ENCODE measurements at regions of chr5 and their contacts with region 1.

Region 1: DNA sequence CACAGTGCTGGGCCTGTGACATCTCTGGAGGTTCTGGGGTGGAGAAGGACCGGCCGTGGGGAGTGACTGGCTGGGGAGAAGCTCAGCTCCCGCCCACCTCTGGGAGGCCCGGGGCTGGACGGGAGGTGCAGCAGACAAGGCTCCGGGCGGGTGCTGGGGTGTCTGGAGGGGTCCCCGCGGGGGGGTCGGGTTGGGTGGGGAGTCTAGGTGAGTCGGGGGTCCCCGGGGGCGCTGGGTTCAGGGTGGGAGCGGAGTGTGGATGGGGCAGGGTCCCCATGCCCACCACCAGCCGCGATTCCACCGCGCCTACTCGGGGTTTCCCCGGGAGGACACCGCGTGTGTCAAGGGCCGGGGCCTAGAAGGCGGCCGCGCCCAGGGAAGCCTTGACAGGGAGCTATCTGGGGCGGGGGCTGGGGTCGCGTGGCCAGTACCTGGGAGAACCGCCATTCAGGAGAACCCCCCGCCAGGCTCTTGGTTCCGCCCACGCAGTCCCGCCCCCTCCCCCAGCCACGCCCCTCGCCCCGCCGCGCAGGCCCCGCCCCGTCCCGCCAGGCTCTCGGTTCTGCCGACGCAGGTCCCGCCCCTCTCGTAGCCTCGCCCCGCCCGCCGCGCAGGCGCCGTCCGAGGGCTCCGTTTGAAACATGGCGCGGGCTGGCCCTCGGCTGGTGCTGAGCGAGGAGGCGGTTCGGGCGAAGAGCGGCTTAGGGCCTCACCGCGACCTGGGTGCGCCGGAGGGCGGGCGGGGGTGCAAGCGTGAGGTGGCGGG is at the start of gene CEP72:
- DNase-seq: peak; percentile 84
- H3K4me3 ChIP-seq: peak within 1 kb of the TSS; percentile 77 to 92 (median 82)
- H3K27ac ChIP-seq: no peak within 1 kb of the TSS
- H3K4me1 ChIP-seq: peaks cover 2% of the 10 kb centered on the region
- H3K27me3 ChIP-seq: no peaks in the 10 kb centered on the region
- CTCF ChIP-seq: no peak
- POLR2A ChIP-seq: no peak
- total RNA-seq, gene CEP72: 9.5 and 9.6 TPM in 2 replicates

Region 2: GRCh38 chr5:472656-473553 is 139.0 kb before region 1 on chr5:
- CTCF ChIA-PET with region 1: no interaction called
- POLR2A ChIA-PET with region 1: no interaction called
- dilution Hi-C with region 1: no loop called
- intact Hi-C with region 1: loop called (anchors 5 kb)
- DNase-seq: peak; percentile 75
- H3K4me3 ChIP-seq: peak overlapping the region; percentile 49 to 79 (median 55)
- H3K27ac ChIP-seq: peak overlapping the region; percentile 82
- H3K4me1 ChIP-seq: peaks cover 6% of the 10 kb centered on the region
- H3K27me3 ChIP-seq: peaks cover 5 to 10% of the 10 kb centered on the region in 2 experiments
- CTCF ChIP-seq: no peak
- POLR2A ChIP-seq: peak; percentile 63

Region 3: DNA sequence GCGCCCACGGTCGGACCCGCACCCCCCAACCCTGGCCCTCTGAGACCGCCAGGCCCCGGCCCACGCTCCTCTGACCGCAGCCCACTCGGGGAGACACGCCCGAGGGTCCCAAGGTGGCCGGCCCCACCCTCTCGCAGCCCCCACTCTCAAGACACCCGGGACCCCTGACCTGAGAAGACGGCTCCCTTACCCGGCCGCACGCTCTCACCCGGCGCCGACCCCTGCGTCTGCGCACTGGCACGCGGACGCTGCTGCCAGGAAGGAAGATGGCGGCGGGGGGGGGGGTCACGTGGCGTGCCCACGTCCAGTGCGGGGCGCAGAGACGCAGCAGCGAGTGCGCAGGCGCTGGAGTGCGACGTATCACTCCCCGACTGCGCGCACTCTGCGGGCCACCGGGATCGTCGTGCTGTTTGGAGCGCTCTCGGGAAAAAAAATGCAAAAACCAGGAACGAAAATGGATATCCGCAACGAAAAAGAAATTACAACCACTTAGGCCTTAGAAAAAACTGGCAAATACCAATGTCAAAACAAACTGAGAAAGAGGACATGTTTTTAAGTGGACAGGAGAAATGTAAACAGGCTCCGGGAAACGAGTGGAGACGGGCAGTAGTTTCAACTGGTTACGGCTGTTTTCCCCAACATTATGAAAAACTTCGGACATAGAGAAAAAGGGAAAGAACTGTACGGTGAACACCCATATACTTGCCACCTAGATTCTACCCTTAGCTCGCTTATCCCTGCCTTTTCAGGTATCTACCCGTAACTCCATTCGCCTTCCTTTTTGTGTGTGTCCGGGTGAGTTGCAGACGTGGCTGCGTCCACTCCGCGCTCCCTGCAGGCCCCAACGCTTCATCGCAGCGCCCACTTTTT is 1187.9 kb after region 1 on chr5 and contains the start of gene MRPL36:
- CTCF ChIA-PET with region 1: no interaction called
- POLR2A ChIA-PET with region 1: no interaction called
- dilution Hi-C with region 1: no loop called
- intact Hi-C with region 1: loop called (anchors 5 kb)
- DNase-seq: peak; percentile 91
- H3K4me3 ChIP-seq: peak within 1 kb of the TSS; percentile 58 to 90 (median 62)
- H3K27ac ChIP-seq: peak within 1 kb of the TSS; percentile 70
- H3K4me1 ChIP-seq: peaks cover 21% of the 10 kb centered on the region
- H3K27me3 ChIP-seq: no peaks in the 10 kb centered on the region
- CTCF ChIP-seq: peak in 1 of 2 donors; percentile 13
- POLR2A ChIP-seq: peak; percentile 85
- total RNA-seq, gene MRPL36: 63.4 and 70.3 TPM in 2 replicates

Measured in endothelial cell of umbilical vein (primary cell).